HCT116 (cell line): ENCODE measurements at regions of chr17 and their contacts with region 1.

Region 1: DNA sequence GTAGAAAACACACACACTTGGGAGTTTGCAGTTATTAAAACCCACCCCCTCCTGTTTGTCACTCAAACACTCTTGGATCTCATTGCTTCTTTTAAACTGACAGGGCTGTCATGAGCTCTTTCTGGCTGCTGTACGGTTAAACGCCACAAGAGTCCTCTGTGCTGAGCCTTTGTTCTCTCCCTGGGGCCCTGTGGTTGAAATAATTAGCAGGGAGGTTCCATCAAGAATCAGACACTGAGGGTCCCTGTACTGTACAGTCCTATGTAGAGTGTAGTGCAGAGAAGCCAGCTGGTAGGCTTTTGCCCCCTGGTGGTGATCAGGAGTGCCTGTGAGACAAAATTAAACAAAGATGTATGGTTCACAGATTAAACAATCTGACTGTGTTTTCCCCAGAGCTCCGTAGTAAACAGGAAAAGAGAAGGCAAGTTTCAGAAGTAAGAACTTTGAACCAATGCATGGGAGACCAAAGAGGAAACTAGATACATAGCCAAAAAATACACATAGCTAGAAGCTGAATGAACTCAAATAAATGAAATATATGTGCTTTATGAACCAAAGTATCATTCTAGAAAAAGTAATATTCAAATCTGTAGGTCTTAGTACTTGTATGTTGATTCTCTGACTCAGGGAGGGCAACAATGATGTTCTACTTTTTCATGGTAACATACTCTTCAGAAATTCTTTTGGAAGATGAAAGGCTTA is 1.4 kb upstream of the SSH2 start:
- DNase-seq: peak; percentile 82
- ATAC-seq: peak; percentile 61
- H3K4me3 ChIP-seq: peak overlapping the region; percentile 74 to 92
- H3K27ac ChIP-seq: no peak overlapping the region; the same call in 1 of the 2 replicates
- H3K4me1 ChIP-seq: peaks cover 13 to 23% of the 10 kb centered on the region in 2 experiments
- H3K27me3 ChIP-seq: no peaks in the 10 kb centered on the region
- CTCF ChIP-seq: peak; percentile 91 to 97 (median 92)
- POLR2A ChIP-seq: no peak
- RAD21 ChIP-seq: peak; percentile 93

Region 2: DNA sequence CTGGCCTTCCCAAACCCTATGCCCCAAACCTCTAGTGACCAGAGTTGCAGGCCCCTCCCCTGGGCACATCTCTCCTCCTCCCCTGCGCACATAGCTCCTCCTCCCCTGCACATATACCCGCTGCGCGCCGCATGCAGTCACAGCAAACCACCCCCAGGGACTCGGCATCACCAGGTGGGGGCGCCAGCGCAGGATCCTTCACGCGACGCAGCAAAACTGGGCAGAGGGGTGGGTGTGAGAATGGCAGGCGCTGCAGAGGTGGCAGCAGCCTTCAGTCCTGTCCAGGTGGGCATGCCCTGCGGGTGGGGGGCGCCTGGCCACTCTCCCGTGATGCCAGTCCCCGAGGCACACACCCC is 314.3 kb before region 1 on chr17:
- CTCF ChIA-PET with region 1: interaction called, 33 read pairs
- POLR2A ChIA-PET with region 1: no interaction called
- RAD21 ChIA-PET with region 1: interaction called in 1 of 2 experiments, 4 read pairs
- intact Hi-C with region 1: no loop called
- DNase-seq: peak; percentile 67
- ATAC-seq: peak; percentile 81
- H3K4me3 ChIP-seq: peak overlapping the region; percentile 36 to 50
- H3K27ac ChIP-seq: peak overlapping the region; percentile 64; the same call in 1 of the 2 replicates
- H3K4me1 ChIP-seq: peaks cover 48 to 64% of the 10 kb centered on the region in 2 experiments
- H3K27me3 ChIP-seq: no peaks in the 10 kb centered on the region
- CTCF ChIP-seq: peak; percentile 62 to 91 (median 84)
- POLR2A ChIP-seq: peak; percentile 30
- RAD21 ChIP-seq: peak; percentile 39; the same call in 1 of the 2 replicates

Region 3: DNA sequence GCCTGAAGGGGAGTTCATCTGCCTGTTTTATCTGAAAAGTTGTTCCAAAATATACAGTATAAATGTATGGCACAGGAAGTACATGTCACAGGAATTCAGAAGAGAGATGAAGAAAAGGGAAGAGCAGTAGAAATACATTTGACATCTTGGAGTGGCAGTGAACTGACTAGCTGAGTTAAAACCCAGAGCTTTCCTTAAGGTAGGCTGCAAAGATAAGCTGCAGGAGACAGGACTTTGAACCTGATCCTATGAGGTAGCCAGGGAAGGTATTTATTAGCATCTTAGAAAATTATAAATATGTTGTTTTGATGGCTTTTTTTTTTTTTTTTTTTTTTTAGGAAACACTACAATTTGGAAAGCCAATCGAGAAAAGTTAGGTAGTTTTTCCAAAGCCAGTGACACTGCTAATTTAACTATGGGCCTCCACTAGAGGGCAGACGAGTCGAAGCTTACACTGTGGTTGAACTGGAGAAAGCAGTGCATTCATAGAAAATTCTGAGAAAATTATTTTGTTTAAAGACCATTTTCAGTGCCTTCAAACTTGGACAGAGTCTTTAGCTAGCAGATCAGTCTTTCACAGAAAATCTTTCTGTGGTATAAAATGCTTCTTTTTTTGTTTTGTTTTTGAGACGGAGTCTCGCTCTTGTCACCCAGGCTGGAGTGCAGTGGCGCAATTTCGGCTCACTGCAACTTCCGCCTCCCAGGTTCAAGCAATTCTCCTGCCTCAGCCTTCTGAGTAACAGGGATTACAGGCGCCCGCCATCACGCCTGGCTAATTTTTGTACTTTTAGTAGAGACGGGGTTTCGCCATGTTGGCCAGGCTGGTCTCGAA is 123.6 kb before region 1 on chr17:
- CTCF ChIA-PET with region 1: interaction called, 106 read pairs
- POLR2A ChIA-PET with region 1: interaction called, 5 read pairs
- RAD21 ChIA-PET with region 1: interaction called, 10 to 13 read pairs
- intact Hi-C with region 1: loop called (anchors 1 kb)
- DNase-seq: peak; percentile 18
- ATAC-seq: peak; percentile 85
- H3K4me3 ChIP-seq: no peak overlapping the region
- H3K27ac ChIP-seq: no peak overlapping the region
- H3K4me1 ChIP-seq: peaks cover 0 to 6% of the 10 kb centered on the region in 2 experiments; a peak in 1 of 4 replicates
- H3K27me3 ChIP-seq: no peaks in the 10 kb centered on the region
- CTCF ChIP-seq: peak; percentile 67 to 79 (median 77)
- POLR2A ChIP-seq: no peak
- RAD21 ChIP-seq: peak; percentile 83

Region 4: DNA sequence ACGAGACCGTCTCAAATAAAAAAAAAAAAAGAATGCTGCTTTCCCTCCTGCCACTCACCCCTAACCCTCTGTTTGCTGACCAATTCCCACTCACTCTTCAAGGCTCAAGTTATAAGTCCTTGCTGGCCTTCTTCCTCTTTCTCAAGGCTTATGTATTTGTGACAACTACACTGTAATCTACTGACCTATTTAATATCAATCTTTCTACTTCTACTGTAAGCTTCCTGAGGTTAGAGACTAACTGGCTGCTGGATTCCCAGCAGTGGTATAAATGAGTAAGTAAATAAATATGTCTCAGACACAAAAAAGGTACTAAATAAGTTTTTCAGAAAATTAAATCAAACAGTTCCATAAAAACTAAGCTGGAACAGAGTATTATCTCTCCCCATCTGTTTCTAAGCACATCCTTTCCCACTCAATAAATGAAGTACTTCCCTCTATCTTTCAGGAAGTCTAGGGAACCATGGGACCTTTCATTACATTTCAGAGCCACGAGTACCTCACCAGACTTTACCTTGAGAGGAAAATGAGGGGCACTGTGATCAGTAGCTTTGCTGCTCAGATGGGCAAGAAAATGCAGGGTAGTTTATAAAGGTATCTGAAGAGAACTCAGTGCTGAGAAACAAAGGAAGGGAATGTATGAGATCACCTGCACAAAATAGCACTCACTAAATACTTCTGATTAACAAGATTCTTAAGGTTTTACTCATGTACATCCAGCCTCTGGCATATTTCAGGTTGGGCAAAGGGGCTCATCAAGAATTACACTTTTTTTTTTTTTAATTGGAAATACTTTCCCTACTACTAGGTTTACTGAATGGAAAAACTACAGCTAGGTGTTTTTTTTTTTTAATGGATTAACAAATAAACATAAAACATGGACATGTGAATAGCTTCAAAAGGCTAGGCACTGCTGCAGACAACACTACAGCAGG is 12.2 kb before region 1 on chr17:
- CTCF ChIA-PET with region 1: interaction called, 12 read pairs
- POLR2A ChIA-PET with region 1: interaction called, 3 read pairs
- RAD21 ChIA-PET with region 1: no interaction called
- intact Hi-C with region 1: no loop called
- DNase-seq: no peak
- ATAC-seq: no peak
- H3K4me3 ChIP-seq: no peak overlapping the region
- H3K27ac ChIP-seq: no peak overlapping the region; the same call in 1 of the 2 replicates
- H3K4me1 ChIP-seq: peaks cover 7 to 15% of the 10 kb centered on the region in 2 experiments; a peak in 3 of 4 replicates
- H3K27me3 ChIP-seq: no peaks in the 10 kb centered on the region
- CTCF ChIP-seq: no peak
- POLR2A ChIP-seq: no peak
- RAD21 ChIP-seq: no peak

Region 5: DNA sequence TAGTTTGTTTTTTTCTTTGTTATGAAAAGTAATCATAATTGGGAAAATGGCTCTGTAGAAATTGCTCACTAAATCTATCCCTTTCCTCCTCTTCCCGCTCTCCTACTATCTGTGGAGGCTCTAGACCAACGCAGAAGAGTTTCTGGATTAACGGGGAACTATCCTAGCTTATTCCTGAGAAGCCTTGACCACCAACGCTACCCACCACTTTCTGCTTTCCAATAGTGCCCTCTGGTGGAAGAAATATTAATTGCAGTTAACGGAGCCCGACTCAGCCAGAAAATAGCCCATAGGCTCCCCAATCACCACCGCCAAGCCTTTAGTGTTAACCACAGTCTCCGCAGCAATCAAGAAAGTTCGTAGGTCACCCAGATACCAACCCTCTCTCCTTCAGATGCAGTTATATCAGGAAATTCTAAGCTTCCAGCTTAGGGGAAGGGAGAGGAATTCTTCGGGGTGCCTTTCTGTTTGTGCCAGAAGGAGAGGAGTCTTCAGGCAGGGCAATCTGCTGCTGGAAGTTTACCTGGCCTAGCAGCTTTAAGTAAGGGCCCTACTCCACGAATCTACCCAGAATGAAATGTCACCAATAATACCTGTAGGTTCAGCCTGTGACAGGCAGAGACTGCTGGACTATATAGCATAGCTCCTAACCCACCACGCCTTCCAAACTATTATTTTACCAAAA is 162.2 kb after region 1 on chr17:
- CTCF ChIA-PET with region 1: interaction called, 45 read pairs
- POLR2A ChIA-PET with region 1: no interaction called
- RAD21 ChIA-PET with region 1: interaction called in 1 of 2 experiments, 5 read pairs
- intact Hi-C with region 1: loop called (anchors 2 kb)
- DNase-seq: peak; percentile 54
- ATAC-seq: peak; percentile 86
- H3K4me3 ChIP-seq: no peak overlapping the region
- H3K27ac ChIP-seq: no peak overlapping the region
- H3K4me1 ChIP-seq: peaks cover 0 to 32% of the 10 kb centered on the region in 2 experiments; a peak in 2 of 4 replicates
- H3K27me3 ChIP-seq: no peaks in the 10 kb centered on the region
- CTCF ChIP-seq: peak; percentile 62 to 91 (median 85)
- POLR2A ChIP-seq: no peak
- RAD21 ChIP-seq: peak; percentile 93